ENCODE measurements at regions of chr10 and their contacts with region 1.

Region 1: GRCh38 chr10:30447125-30447799 is 13.3 kb downstream of the MAP3K8 start:
- DNase-seq: no peak
- ATAC-seq: peak; percentile 35
- H3K4me3 ChIP-seq: no peak overlapping the region
- H3K27ac ChIP-seq: no peak overlapping the region
- H3K4me1 ChIP-seq: peaks cover 13% of the 10 kb centered on the region
- H3K27me3 ChIP-seq: no peaks in the 10 kb centered on the region
- CTCF ChIP-seq: no peak
- EP300 ChIP-seq: no peak
- POLR2A ChIP-seq: no peak
- RAD21 ChIP-seq: no peak

Region 2: DNA sequence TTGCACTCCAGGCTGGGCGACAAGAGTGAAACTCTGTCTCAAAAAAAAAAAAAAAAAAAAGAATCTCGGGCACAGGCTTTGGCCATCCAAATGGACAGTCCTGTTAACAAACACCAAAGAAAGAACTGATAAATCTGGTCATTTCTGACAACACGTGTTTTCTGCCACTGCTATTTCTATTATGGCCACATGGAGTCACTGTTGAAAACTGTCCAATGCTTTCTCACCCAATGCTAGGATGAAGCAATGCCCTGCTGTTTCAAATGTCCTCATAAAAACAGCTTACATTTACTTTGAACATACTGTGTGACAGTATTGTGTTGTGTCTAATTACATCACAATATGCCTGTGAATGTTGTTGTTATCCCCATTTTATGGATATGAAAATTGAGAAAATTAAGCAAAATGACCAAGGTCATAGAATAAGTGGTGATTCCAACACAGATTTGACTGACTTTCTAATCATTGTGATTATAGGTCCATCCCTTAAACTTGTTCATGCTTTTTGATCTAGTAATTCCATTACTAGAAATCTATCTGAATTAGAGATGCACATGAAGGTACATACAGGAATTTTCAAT is 33.2 kb before region 1 on chr10:
- CTCF ChIA-PET with region 1: interaction called, 3 read pairs
- POLR2A ChIA-PET with region 1: interaction called, 3 read pairs
- RAD21 ChIA-PET with region 1: interaction called, 5 read pairs
- SMC1A ChIA-PET with region 1: interaction called, 24 read pairs
- in situ Hi-C with region 1: no loop called
- intact Hi-C with region 1: loop called (anchors 5 kb)
- DNase-seq: no peak
- ATAC-seq: peak; percentile 71
- H3K4me3 ChIP-seq: no peak overlapping the region
- H3K27ac ChIP-seq: no peak overlapping the region
- H3K4me1 ChIP-seq: peaks cover 28% of the 10 kb centered on the region
- H3K27me3 ChIP-seq: no peaks in the 10 kb centered on the region
- CTCF ChIP-seq: peak; percentile 78 to 87 (median 84)
- EP300 ChIP-seq: no peak
- POLR2A ChIP-seq: no peak
- RAD21 ChIP-seq: peak; percentile 97

Region 3: GRCh38 chr10:30812018-30812851 is 365.0 kb after region 1 on chr10:
- CTCF ChIA-PET with region 1: no interaction called
- POLR2A ChIA-PET with region 1: no interaction called
- RAD21 ChIA-PET with region 1: no interaction called
- SMC1A ChIA-PET with region 1: no interaction called
- in situ Hi-C with region 1: no loop called
- intact Hi-C with region 1: no loop called
- DNase-seq: no peak
- ATAC-seq: no peak
- H3K4me3 ChIP-seq: no peak overlapping the region
- H3K27ac ChIP-seq: no peak overlapping the region
- H3K4me1 ChIP-seq: no peaks in the 10 kb centered on the region
- H3K27me3 ChIP-seq: no peaks in the 10 kb centered on the region
- CTCF ChIP-seq: no peak
- EP300 ChIP-seq: no peak
- POLR2A ChIP-seq: no peak
- RAD21 ChIP-seq: no peak

Measured in GM12878 (cell line).